ENCODE measurements at regions of chr18 and their contacts with region 1.

Region 1: DNA sequence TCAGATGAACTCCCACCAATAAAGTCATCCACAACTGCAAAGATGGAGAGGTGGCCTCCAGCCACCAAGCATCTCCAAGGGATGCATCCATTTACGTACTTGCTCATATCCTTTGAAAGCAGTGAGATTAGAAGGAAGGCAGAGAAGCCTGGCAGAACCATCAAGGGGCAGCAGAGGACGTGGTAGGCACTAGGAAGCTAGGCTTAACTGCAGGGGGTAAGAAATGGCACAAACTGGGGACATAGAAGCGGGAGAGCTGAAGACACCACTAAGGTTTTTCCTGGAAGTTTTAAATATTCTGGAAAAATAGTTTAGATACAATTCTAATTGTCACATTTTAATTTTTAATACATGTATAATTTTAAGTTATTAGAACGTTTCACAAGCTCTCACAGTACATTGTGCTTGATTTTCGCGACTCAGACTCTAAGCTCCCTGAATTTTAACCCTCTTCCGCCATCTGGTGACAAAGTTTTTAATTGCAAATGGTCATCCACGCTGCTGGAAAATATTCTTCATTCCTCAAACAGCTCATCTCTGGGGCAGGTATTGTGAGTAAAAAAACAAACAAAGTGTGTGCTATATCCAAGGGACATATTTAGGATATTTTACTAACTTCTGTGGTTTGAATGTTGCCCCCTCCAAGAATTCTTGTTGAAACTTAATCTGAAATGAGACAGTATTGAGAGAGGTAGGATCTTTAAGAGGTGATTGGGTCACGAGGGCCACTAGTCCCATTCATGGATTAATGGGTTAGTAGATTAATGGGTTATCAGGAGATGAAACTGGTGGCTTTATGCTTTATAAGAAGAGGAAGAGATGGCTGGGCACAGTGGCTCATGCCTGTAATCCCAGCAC is 1.6 kb upstream of the PSTPIP2 start:
- DNase-seq: peak; percentile 47
- H3K4me3 Mint-ChIP-seq: peak overlapping the region; percentile 32
- H3K27ac Mint-ChIP-seq: peak overlapping the region; percentile 14
- H3K4me1 Mint-ChIP-seq: peaks cover 42% of the 10 kb centered on the region
- H3K27me3 Mint-ChIP-seq: peaks cover 3% of the 10 kb centered on the region

Region 2: DNA sequence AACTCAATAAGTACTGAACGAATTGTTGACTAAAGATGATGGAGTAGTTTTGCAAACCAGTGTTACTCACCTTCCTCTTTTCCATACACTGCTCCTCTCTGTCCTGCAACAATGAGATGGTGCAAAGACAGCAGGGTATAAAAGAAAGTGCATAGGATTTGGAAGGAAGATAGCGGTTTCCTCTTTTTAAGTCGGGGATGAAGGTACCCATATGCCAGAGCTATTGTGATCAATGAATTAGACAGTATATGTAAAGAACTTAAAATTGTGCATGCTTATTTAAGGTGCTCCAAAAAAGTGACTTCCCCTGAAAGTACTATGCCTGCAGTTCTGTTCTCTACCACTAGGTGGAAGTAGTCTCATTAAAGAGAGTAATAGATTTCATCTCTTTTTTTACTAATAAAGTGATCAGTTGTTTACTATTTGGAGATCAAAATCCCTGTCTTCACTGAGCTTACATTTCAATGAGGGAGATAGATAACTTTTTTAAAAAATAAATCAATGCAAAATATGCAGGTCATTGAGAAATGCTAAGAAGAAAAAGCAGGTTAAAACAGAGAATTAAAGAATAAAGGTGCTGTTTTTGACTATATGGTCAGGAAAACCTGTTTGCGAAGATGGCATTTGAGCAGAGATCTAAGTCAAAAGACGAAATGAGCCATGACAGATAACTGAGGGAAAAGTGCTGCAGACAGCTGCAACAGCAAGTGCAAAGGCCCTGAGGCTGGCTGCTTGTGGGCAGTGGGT is 798.2 kb before region 1 on chr18:
- intact Hi-C with region 1: loop called (anchors 10 kb)
- DNase-seq: no peak
- H3K4me3 Mint-ChIP-seq: no peak overlapping the region
- H3K27ac Mint-ChIP-seq: no peak overlapping the region
- H3K4me1 Mint-ChIP-seq: no peaks in the 10 kb centered on the region
- H3K27me3 Mint-ChIP-seq: no peaks in the 10 kb centered on the region

Region 3: DNA sequence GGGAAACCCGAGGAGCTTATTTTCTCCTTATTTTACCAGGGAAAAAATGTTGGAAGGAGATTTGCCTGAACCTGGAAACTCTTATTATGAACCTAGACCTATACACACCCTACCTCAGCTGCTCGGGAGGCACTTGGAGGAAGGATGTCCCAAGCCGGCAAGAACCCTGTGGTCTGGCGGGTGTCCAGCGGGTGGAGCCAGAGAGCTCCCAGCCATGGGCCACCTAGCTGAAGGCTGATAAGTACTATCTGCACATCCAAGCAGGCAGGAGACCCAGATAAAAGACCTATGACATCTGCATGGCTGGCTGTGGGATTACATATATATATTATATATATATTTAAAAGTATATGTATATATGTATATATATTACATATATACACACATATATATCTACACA is 350.8 kb before region 1 on chr18:
- intact Hi-C with region 1: loop called (anchors 10 kb)
- DNase-seq: peak; percentile 54
- H3K4me3 Mint-ChIP-seq: no peak overlapping the region
- H3K27ac Mint-ChIP-seq: no peak overlapping the region
- H3K4me1 Mint-ChIP-seq: no peaks in the 10 kb centered on the region
- H3K27me3 Mint-ChIP-seq: peaks cover 21% of the 10 kb centered on the region

Region 4: GRCh38 chr18:45920367-45920766 is 153.3 kb before region 1 on chr18:
- intact Hi-C with region 1: loop called (anchors 2 kb)
- DNase-seq: no peak
- H3K4me3 Mint-ChIP-seq: no peak overlapping the region
- H3K27ac Mint-ChIP-seq: no peak overlapping the region
- H3K4me1 Mint-ChIP-seq: no peaks in the 10 kb centered on the region
- H3K27me3 Mint-ChIP-seq: no peaks in the 10 kb centered on the region

Region 5: GRCh38 chr18:45997700-45998151 is 76.0 kb before region 1 on chr18:
- intact Hi-C with region 1: loop called (anchors 1 kb)
- DNase-seq: peak; percentile 4
- H3K4me3 Mint-ChIP-seq: peak overlapping the region; percentile 66
- H3K27ac Mint-ChIP-seq: peak overlapping the region; percentile 68
- H3K4me1 Mint-ChIP-seq: peaks cover 24% of the 10 kb centered on the region
- H3K27me3 Mint-ChIP-seq: no peaks in the 10 kb centered on the region

Region 6: DNA sequence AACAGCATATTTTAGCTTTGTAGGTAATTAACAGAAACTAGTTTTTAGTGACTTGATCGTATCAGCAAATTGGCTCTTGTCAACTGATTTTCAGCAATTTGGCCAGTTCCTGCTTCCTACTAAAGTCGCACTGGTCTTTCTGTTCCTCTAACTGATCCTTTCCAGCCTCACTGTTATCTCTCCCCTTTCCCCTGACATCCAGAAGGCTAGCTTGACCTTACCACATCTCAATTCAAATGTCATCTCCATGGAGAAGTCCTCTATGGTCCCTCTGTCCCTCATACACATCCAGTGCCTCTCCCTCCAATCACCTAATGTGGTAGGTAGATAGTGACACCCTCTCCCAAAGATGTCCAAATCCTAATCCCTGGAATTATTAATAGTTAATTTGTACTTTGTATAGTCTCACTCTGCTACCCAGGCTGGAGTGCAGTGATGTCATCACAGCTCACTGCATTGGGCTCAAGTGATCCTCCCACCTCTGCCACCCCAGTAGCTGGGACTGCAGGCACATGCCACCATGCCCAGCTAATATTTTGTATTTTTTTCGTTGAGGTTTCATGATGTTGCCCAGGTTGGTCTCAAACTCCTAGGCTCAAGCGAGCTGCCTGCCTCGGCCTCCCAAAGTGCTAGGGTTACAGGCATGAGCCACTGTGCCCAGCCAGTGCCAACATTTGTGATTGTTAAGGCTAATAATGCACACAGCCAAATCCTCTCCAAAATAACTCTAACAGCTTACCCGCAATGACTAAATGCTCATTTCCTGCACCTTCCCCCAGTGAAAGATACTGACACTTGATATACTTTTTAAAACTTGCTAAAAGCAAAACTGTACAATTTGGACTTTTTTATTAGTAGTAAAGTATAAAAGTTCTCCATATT is 18.5 kb before region 1 on chr18:
- intact Hi-C with region 1: loop called (anchors 2 kb)
- DNase-seq: no peak
- H3K4me3 Mint-ChIP-seq: peak overlapping the region; percentile 40
- H3K27ac Mint-ChIP-seq: peak overlapping the region; percentile 57
- H3K4me1 Mint-ChIP-seq: peaks cover 36% of the 10 kb centered on the region
- H3K27me3 Mint-ChIP-seq: no peaks in the 10 kb centered on the region